ENCODE measurements at regions of chr16 and their contacts with region 1.

Region 1: GRCh38 chr16:4330277-4330874 is 14.5 kb downstream of the GLIS2 start:
- DNase-seq: peak; percentile 85
- ATAC-seq: peak; percentile 63 to 64

Region 2: DNA sequence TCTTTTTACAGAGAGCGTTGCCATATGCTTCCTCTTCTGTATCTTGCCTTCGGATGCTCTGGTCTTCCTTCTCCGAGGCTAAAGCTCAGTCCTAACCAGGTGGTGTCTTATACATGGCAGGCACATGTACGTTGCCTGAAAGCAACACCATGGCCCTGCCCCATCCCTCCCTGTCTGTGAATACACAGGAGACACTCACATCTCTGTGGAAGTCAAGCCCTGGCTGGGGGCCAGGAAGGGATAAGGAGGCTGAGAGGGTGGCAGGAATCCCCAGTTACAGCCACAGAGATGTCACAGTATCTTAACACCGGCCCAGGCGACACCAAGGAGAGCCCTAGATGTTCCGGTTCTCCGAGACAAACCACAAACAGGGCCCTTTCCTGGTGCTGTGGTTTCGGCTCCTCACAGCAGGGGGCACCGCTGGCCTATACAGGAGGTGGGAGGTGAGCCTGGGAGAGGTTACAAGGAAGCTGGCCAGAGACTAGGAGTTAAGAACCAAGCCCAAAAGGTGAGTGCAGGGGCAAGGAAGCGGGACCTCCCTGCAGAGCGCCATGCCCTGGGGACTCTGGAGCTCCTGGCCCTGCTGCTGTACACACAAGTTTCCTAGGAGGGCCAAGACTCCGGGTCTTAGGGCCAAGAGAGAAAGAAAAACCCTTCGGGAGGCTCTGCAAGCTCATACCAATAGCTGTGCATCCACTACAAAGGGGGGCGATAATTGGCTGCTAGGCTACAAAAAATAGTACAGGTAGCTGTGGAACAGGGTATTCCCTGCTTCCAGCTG is 130.2 kb before region 1 on chr16:
- intact Hi-C with region 1: loop called in 1 of 2 experiments (anchors 10 kb)
- DNase-seq: peak; percentile 59
- ATAC-seq: peak; percentile 86 to 87

Region 3: DNA sequence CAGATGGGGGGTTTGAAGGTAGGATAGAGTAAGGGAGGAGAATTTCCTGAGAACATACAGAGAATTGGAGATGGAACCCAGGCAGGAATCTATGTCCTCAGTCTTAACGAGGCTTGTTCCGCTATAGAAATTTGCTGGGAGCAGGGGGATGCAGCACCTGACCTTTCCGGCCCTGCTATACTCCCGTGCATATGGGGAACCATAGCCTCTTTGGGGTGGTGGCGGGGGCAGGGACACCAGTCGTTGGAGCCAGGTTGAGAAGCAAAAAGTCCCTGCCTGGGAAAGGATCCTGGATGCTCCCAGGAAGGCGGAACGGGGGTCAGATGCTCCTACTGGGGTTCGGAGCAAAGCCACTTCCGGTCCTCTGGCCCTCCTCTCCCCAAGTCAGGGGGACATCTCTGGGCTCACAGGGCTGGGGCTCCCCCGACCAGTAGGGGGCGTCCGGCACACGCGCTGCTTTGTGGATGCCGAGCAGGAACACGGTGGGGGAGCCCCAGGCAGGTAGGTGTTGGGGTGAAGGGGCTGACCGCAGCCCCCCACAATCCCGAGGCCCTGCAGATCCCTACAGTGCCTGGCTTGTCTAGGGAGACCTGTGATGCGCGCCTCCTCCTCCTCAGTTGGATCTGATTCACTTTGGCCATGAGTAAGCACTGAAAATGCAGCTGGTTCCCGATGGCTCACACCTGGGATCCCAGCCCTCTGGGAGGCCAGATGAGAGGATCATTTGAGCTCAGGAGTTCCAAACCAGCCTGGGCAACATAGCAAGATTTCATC is 42.0 kb before region 1 on chr16:
- intact Hi-C with region 1: loop called (anchors 2 to 5 kb)
- DNase-seq: peak; percentile 81
- ATAC-seq: peak; percentile 76 to 82

Region 4: DNA sequence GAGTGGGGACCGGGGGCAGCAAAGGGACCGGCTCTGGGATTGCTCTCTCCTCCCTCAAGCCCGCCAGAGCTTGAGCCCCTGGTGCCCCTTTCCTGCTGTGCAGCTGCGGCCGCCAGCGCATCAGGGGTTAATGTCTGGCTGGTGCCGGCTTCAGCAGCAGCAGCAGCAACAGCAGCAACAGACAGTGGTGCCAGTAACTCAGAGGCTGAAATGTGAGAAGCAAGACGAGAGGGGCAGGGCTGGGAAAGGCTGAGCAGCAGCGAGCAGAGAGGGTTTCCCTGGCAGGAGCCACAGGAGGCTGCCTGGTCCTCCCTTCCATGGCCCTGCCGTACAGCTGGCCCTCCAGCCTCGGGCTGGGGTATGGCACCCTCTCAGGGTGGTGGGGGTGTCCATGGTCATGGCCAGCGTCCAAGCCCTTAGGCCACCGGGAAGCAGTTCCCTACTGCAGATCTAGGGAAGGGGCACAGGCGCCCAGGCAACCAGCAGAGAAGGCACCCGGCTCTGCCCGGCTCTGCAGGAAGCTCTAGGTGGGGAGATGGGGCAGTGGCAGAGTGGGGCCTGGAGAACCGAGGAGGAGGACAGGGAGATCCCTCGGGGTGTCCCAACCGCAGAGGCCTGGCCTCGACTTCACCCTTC is 36.4 kb before region 1 on chr16:
- intact Hi-C with region 1: loop called (anchors 2 to 5 kb)
- DNase-seq: peak; percentile 57
- ATAC-seq: peak; percentile 81 to 90

Region 5: GRCh38 chr16:4384509-4384942 is 54.1 kb after region 1 on chr16:
- intact Hi-C with region 1: no loop called
- DNase-seq: peak; percentile 52
- ATAC-seq: peak in 1 of 2 donors; percentile 5

Measured in left cardiac atrium (tissue), 4 donors.